ENCODE measurements at regions of chr3 and their contacts with region 1.

Region 1: GRCh38 chr3:134655706-134656105 is 4.9 kb upstream of the KY start:
- DNase-seq: no peak
- H3K4me3 ChIP-seq: no peak overlapping the region
- H3K27ac ChIP-seq: no peak overlapping the region
- H3K4me1 ChIP-seq: peaks cover 0 to 6% of the 10 kb centered on the region in 2 donors
- H3K27me3 ChIP-seq: no peaks in the 10 kb centered on the region
- CTCF ChIP-seq: no peak
- POLR2A ChIP-seq: no peak

Region 2: DNA sequence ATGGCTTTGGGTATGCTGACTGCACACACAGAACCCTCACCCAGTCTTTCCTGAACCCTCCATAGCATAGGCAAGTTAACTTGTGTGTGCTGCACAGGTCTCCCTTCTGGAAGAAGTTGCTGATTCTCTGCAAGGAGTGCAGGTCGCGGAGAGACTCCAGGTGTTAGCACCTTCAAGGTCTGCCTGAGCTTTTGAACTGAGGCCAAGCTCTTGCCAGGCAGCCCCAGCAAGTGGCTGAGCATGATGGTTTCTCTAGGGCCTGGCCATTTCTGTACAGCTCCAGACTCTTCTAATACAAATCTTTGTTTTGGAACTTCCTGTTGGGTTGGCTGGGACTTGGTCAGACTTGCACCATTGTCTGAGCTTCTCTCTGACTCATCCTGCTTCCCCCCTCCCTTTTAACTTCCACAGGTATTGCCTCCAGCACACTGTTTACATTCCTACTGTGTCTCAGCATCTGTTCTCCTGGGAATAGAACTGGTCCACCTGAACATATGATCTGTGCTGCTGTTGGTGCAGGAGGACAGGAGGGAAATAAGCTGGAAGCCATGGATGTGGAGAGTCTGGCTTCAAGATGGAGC is 58.2 kb before region 1 on chr3:
- intact Hi-C with region 1: loop called (anchors 2 kb)
- DNase-seq: no peak
- H3K4me3 ChIP-seq: no peak overlapping the region
- H3K27ac ChIP-seq: no peak overlapping the region
- H3K4me1 ChIP-seq: no peaks in the 10 kb centered on the region
- H3K27me3 ChIP-seq: no peaks in the 10 kb centered on the region
- CTCF ChIP-seq: no peak
- POLR2A ChIP-seq: no peak

Region 3: DNA sequence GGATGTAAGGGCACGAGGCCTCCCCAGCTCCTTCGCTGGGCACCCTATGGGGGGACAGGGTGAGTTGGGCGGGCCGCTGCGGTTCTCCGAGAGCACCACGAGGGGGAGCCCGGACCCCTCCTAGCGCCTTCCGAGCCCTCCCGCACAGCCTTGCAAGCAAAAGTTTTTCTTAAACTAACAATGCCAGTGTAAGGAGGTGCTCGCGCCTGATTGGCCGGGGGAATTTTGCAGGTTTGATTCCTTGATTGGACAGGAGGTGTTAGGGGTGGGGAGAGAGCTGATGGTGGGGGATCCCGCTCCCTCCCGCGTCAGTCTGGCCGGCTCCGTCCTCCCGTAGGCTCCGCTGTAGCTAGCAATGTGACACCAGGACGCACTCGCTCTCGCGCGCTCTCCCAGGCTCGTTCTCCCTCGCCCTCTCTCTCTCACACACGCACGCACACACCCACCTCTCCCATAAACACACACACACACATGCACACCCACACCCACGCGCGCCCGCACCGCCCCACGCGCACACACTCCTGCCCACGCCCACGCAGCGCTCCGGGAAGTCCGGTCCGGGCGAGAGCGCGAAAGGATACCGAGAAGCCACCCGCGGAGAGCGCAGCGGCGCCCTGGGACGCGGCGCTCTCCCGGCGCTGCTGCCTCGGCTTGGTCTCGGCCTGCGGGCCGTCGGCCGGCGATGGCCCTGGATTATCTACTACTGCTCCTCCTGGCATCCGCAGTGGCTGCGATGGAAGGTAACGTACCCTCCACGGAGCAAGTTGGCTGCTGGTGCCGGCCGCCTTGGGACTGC is 139.4 kb after region 1 on chr3 and contains the start of gene EPHB1:
- intact Hi-C with region 1: no loop called
- DNase-seq: peak; percentile 74 to 92
- H3K4me3 ChIP-seq: peak within 1 kb of the TSS; percentile 44 to 73 (median 62)
- H3K27ac ChIP-seq: peak within 1 kb of the TSS; percentile 40 to 81
- H3K4me1 ChIP-seq: peaks cover 0 to 5% of the 10 kb centered on the region in 2 donors
- H3K27me3 ChIP-seq: peaks cover 0 to 31% of the 10 kb centered on the region in 2 donors
- CTCF ChIP-seq: peak in 2 of 3 donors; percentile 69 to 76
- POLR2A ChIP-seq: peak; percentile 34
- total RNA-seq, gene EPHB1: 1.8 to 5.9 (median 3.4) TPM